Calu3 (cell line): ENCODE measurements at regions of chr18 and their contacts with region 1.

Region 1: GRCh38 chr18:58768293-58768974 is 96.2 kb upstream of the ZNF532 start:
- DNase-seq: peak; percentile 90
- H3K4me3 Mint-ChIP-seq: peak overlapping the region; percentile 67
- H3K27ac Mint-ChIP-seq: no peak overlapping the region
- H3K4me1 Mint-ChIP-seq: no peaks in the 10 kb centered on the region
- H3K27me3 Mint-ChIP-seq: peaks cover 27% of the 10 kb centered on the region
- CTCF ChIP-seq: peak; percentile 85

Region 2: DNA sequence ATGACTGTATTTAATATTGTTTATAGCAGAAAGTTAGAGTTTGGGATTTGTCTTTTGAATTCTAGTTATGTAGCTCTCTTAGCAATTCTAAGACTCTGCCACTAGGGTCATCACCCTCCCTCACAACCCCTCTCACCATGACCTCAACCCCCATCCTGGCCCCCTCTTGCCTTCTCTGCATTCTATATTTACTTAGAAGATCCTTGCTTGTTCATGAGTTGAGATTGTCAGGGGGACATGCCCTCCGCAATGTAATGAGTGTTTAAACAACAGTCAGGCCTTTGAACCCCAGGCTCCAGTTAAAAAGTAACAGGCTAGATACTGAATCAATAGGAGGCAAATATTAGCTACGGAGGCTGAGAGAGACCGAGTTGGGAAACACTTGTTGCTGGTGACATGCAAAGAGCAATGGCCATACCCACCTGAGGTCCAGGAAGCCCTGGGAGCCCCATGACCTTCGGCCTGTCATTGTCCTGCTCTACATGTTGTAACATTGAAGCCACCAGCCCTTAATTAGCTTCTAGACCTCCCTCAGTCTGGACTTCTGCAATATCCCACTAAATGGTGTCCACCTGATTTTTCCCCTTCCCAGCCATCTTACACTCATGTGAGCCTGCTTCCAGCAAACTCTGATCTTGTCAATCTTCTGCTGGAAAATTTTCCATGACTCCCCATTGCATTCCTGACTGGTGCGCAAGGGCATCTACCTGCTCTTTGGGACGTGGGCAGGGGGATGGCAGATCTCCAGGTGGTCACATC is 360.6 kb before region 1 on chr18:
- CTCF ChIA-PET with region 1: interaction called, 11 read pairs
- intact Hi-C with region 1: no loop called
- DNase-seq: no peak
- H3K4me3 Mint-ChIP-seq: no peak overlapping the region
- H3K27ac Mint-ChIP-seq: no peak overlapping the region
- H3K4me1 Mint-ChIP-seq: no peaks in the 10 kb centered on the region
- H3K27me3 Mint-ChIP-seq: no peaks in the 10 kb centered on the region
- CTCF ChIP-seq: peak; percentile 34

Region 3: DNA sequence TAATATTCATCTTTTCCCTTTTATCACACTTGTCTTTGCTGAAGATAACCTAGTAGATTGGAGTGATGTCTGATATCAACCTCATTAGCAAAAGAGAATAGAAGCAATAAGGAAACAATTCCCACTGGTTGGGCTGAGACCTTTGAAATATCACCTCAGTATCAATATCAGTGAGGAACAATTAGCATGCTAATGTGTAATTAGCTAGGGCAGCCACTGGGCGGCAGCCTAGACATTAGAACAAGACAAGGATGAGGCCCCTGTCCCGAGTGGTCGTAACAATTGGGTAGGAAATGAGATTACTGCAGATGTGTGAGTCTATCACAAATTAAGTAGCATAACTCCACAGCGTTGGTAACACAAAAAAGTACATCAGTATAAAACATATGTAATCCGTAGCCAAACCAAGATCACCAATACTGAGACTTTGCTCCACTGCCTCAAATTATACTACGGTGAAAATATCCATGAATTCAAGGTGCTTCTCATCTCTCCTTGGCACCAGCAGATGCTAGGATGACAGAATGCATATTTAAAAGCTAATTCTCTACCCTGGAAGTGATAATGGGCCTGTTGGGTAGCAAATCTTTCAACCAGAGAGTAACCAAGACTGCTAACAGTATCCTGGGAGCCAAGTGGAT is 238.6 kb before region 1 on chr18:
- CTCF ChIA-PET with region 1: interaction called, 17 read pairs
- intact Hi-C with region 1: loop called (anchors 1 kb)
- DNase-seq: peak; percentile 70
- H3K4me3 Mint-ChIP-seq: no peak overlapping the region
- H3K27ac Mint-ChIP-seq: no peak overlapping the region
- H3K4me1 Mint-ChIP-seq: peaks cover 47% of the 10 kb centered on the region
- H3K27me3 Mint-ChIP-seq: no peaks in the 10 kb centered on the region
- CTCF ChIP-seq: peak; percentile 94

Region 4: DNA sequence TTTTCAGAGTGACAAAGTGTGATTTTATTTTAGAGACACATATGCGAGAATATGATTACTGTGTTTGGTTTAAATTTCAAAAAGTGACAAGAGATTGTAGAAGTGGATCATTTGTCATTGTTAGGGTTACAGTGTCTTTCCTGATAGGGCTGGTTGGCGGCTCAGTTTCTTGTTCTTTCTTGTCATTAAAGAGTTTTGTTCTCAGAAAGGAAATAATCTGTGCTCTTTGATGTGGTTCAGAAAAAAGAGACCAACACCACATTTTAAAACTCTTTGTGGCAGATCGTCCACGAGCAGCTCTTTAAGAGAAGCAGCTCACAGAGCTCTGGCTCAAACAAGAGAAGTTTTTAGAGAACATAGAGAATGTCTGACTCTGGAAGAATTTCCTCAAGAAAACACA is 50.6 kb after region 1 on chr18:
- CTCF ChIA-PET with region 1: no interaction called
- intact Hi-C with region 1: no loop called
- DNase-seq: no peak
- H3K4me3 Mint-ChIP-seq: no peak overlapping the region
- H3K27ac Mint-ChIP-seq: no peak overlapping the region
- H3K4me1 Mint-ChIP-seq: no peaks in the 10 kb centered on the region
- H3K27me3 Mint-ChIP-seq: no peaks in the 10 kb centered on the region
- CTCF ChIP-seq: no peak

Region 5: GRCh38 chr18:59085797-59086196 is 317.4 kb after region 1 on chr18:
- CTCF ChIA-PET with region 1: interaction called, 18 read pairs
- intact Hi-C with region 1: no loop called
- DNase-seq: no peak
- H3K4me3 Mint-ChIP-seq: no peak overlapping the region
- H3K27ac Mint-ChIP-seq: no peak overlapping the region
- H3K4me1 Mint-ChIP-seq: peaks cover 11% of the 10 kb centered on the region
- H3K27me3 Mint-ChIP-seq: peaks cover 74% of the 10 kb centered on the region
- CTCF ChIP-seq: no peak